ENCODE measurements at regions of chr1 and their contacts with region 1.

Region 1: DNA sequence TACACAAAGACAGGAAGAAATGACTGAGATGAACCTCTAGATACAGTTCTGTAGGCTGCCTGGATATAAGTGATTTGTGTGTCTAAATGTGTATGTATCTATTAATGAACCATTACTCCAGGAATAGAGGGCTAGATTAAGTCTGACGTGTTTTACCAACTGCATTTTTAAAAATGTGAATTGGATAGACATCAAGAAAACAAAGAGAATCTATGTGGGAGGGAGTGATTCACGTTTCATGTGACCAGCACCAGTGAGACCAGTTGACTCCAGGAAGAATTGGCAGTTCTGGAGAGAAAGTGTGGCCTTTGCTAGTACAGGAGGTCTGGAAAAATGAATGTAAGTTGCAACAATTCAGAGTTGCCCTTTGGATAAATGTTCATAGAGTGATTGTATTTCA is 53.4 kb upstream of the RGS21 start:
- DNase-seq: peak; percentile 88
- H3K4me3 ChIP-seq: no peak overlapping the region
- H3K27ac ChIP-seq: peak overlapping the region; percentile 83
- H3K4me1 ChIP-seq: peaks cover 28% of the 10 kb centered on the region
- H3K27me3 ChIP-seq: no peaks in the 10 kb centered on the region
- CTCF ChIP-seq: no peak
- POLR2A ChIP-seq: no peak

Region 2: GRCh38 chr1:191707288-191707687 is 556.1 kb before region 1 on chr1:
- CTCF ChIA-PET with region 1: no interaction called
- POLR2A ChIA-PET with region 1: no interaction called
- dilution Hi-C with region 1: no loop called
- intact Hi-C with region 1: no loop called
- DNase-seq: no peak
- H3K4me3 ChIP-seq: no peak overlapping the region
- H3K27ac ChIP-seq: no peak overlapping the region
- H3K4me1 ChIP-seq: no peaks in the 10 kb centered on the region
- H3K27me3 ChIP-seq: no peaks in the 10 kb centered on the region
- CTCF ChIP-seq: no peak
- POLR2A ChIP-seq: no peak

Region 3: GRCh38 chr1:192225703-192226102 is 37.7 kb before region 1 on chr1:
- CTCF ChIA-PET with region 1: no interaction called
- POLR2A ChIA-PET with region 1: no interaction called
- dilution Hi-C with region 1: no loop called
- intact Hi-C with region 1: loop called (anchors 2 kb)
- DNase-seq: peak; percentile 73
- H3K4me3 ChIP-seq: no peak overlapping the region
- H3K27ac ChIP-seq: peak overlapping the region; percentile 47
- H3K4me1 ChIP-seq: peaks cover 12% of the 10 kb centered on the region
- H3K27me3 ChIP-seq: no peaks in the 10 kb centered on the region
- CTCF ChIP-seq: no peak
- POLR2A ChIP-seq: no peak

Region 4: DNA sequence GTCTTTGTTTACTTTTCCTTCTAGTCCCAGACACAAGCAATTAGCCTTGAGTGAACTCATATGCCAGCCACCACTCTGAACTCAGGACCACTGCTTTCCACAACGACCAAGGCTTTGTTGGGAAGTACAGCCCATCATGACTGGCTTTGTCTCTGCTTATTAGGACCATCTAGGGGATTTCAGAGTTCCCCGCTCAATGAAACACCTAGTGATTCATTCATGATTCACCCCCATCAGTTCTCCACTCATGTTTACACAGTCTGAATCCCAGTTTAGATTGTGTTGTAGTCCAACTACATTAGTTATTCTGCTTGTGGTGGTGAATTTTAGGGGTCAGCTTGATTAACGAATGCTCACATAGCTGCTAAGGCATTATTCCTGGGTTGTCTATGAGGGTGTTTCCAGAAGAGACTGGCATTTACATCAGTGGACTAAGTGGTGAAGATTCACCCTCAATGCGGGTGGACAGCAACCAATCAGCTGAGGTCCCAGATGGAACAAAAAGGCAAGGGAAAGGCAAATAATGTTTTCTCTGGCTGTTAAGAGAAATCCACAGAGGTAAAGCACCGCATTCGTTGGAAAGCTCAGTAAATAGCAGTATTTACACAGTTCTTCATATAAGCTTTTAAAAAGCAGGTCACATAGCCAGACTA is 176.1 kb after region 1 on chr1:
- CTCF ChIA-PET with region 1: no interaction called
- POLR2A ChIA-PET with region 1: no interaction called
- dilution Hi-C with region 1: no loop called
- intact Hi-C with region 1: loop called (anchors 5 kb)
- DNase-seq: peak; percentile 72
- H3K4me3 ChIP-seq: no peak overlapping the region
- H3K27ac ChIP-seq: peak overlapping the region; percentile 51
- H3K4me1 ChIP-seq: peaks cover 28% of the 10 kb centered on the region
- H3K27me3 ChIP-seq: no peaks in the 10 kb centered on the region
- CTCF ChIP-seq: no peak
- POLR2A ChIP-seq: no peak